H1 (cell line): ENCODE measurements at regions of chr7 and their contacts with region 1.

Region 1: GRCh38 chr7:100221231-100221718 is 1.5 kb downstream of the PVRIG start:
- DNase-seq: no peak
- H3K4me3 ChIP-seq: no peak overlapping the region
- H3K27ac ChIP-seq: no peak overlapping the region
- H3K4me1 ChIP-seq: no peaks in the 10 kb centered on the region
- H3K27me3 ChIP-seq: no peaks in the 10 kb centered on the region
- CTCF ChIP-seq: no peak
- EP300 ChIP-seq: no peak
- POLR2A ChIP-seq: no peak
- RAD21 ChIP-seq: no peak

Region 2: GRCh38 chr7:100088621-100089457 is 132.4 kb before region 1 on chr7 and contains the start of gene COPS6:
- CTCF ChIA-PET with region 1: no interaction called
- POLR2A ChIA-PET with region 1: no interaction called
- DNase-seq: peak in 1 of 2 experiments; percentile 93
- H3K4me3 ChIP-seq: peak within 1 kb of the TSS; percentile 78 to 98 (median 96)
- H3K27ac ChIP-seq: peak within 1 kb of the TSS; percentile 77
- H3K4me1 ChIP-seq: no peaks in the 10 kb centered on the region; a peak in 1 of 7 replicates
- H3K27me3 ChIP-seq: no peaks in the 10 kb centered on the region
- CTCF ChIP-seq: no peak
- EP300 ChIP-seq: peak in 1 of 2 experiments; percentile 13; a peak in 1 of 3 replicates
- POLR2A ChIP-seq: peak; percentile 54 to 83
- RAD21 ChIP-seq: no peak
- total RNA-seq, gene COPS6: 127 and 128 TPM in 2 replicates

Region 3: GRCh38 chr7:100137851-100138760 is 83.2 kb before region 1 on chr7:
- CTCF ChIA-PET with region 1: interaction called, 104 read pairs
- POLR2A ChIA-PET with region 1: interaction called, 7 read pairs
- DNase-seq: no peak
- H3K4me3 ChIP-seq: no peak overlapping the region
- H3K27ac ChIP-seq: no peak overlapping the region
- H3K4me1 ChIP-seq: peaks cover 0 to 2% (median 0%) of the 10 kb centered on the region in 4 experiments; a peak in 1 of 7 replicates
- H3K27me3 ChIP-seq: no peaks in the 10 kb centered on the region
- CTCF ChIP-seq: no peak
- EP300 ChIP-seq: no peak
- POLR2A ChIP-seq: no peak
- RAD21 ChIP-seq: no peak

Region 4: DNA sequence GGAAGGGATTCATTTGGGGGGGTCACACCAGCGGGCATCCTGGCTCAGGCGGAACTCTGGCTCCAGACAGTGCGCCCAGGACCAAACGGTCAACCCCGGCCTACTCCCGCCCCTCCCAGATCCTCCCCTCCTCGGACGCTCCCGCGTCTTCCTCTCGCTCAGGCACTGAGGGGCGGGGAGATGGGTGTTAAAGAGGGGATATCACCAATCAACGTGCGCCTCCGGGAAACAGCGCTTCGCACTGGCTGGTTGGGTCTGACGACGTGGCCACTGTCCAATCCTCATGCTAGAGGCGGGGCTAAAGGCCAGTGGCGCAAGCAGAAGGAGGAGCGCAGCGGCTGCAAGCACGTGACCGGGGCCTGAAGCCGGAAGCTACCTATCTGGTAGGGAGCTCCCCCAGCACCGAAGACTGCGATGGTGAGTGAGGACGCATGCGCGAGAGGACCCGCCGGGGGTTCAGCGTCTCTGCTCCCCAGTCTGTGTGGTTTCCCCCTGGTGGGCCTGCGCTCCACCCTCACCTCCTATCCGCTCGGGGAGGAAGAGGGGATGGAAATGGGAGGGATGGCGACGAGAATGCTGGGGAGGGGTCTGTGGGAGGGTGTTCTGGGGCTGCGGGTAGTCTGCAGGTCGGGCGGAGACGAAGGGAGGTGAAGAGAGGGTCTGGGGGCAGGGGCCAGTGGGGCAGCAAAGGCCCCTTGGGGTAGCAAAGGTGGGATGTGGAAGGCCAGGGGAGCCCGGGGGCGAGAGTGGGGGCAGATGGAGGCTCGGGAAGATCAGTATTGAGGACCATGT is 72.5 kb before region 1 on chr7 and contains the start of gene LAMTOR4:
- CTCF ChIA-PET with region 1: interaction called, 11 read pairs
- POLR2A ChIA-PET with region 1: interaction called, 7 read pairs
- DNase-seq: peak; percentile 94 to 99
- H3K4me3 ChIP-seq: peak within 1 kb of the TSS; percentile 71 to 89 (median 78)
- H3K27ac ChIP-seq: no peak within 1 kb of the TSS
- H3K4me1 ChIP-seq: peaks cover 0 to 4% (median under 1%) of the 10 kb centered on the region in 4 experiments; a peak in 3 of 7 replicates
- H3K27me3 ChIP-seq: no peaks in the 10 kb centered on the region
- CTCF ChIP-seq: peak in 1 of 3 experiments; percentile 18; a peak in 2 of 4 replicates
- EP300 ChIP-seq: no peak
- POLR2A ChIP-seq: peak; percentile 38 to 69; a peak in 2 of 3 replicates
- RAD21 ChIP-seq: no peak
- total RNA-seq, gene LAMTOR4: 153 and 161 TPM in 2 replicates

Region 5: DNA sequence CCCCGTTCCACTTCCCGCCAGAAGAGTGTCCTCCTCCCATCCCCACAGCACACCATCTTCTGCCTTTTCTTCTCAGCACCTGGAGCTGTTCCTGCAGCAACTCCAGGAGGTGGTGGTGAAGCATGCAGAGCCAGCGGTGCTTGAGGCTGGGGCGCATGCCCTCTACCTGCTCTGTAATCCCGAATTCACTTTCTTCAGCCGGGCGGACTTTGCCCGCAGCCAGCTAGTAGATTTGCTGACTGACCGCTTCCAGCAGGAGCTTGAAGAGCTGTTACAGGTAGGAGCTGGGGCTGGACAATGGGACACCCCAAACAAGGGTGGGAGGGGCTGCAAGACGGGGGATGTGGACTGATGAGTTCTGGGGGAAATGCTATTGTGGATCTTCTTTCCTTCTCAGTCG is 20.6 kb before region 1 on chr7:
- CTCF ChIA-PET with region 1: interaction called, 25 read pairs
- POLR2A ChIA-PET with region 1: interaction called, 5 read pairs
- DNase-seq: no peak
- H3K4me3 ChIP-seq: no peak overlapping the region
- H3K27ac ChIP-seq: no peak overlapping the region
- H3K4me1 ChIP-seq: peaks cover 0 to 9% (median 3%) of the 10 kb centered on the region in 4 experiments; a peak in 3 of 7 replicates
- H3K27me3 ChIP-seq: peaks cover 0 to 4% (median 1%) of the 10 kb centered on the region in 4 experiments; a peak in 4 of 7 replicates
- CTCF ChIP-seq: no peak
- EP300 ChIP-seq: no peak
- POLR2A ChIP-seq: no peak
- RAD21 ChIP-seq: no peak

Region 6: DNA sequence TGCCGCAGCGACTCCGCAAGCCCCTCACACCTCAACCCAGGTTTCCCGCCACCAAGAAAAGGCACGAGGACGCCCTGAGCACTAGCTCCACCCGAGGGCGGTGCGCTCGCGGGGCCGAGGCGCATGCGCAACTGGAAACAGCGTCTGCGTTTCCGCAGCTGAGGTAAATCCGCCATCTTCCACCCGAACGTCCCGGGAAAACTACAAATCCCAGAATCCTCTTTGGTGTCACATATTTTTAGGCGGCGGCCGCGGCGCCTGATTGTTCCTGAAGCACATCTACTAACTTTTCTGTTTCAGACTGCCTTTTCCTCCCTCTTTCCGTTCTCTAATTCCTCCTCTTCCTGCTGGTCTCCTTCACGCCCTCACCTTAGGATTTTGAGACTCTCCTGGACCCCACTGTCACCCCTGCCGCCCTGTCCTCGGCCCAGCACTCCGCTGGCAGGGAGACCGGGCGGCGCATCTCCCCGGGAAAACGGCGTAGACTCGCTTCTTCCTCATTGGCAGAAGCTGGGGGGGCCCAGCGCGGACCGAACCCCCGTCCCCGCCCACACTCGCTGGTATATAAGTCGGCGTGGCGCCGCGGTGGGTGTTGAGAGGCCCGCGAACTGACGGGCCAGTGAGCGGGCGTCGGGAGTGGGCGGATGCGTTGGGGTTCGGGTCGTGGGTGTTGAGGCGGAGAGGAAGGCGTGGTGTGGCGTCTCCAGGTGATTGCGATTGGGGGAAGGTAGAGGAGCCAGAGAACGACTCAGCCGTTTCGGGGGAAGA is 207.1 kb after region 1 on chr7 and contains the start of gene ZCWPW1:
- CTCF ChIA-PET with region 1: no interaction called
- POLR2A ChIA-PET with region 1: no interaction called
- DNase-seq: peak; percentile 90 to 96
- H3K4me3 ChIP-seq: peak within 1 kb of the TSS; percentile 73 to 85 (median 80)
- H3K27ac ChIP-seq: peak within 1 kb of the TSS; percentile 96
- H3K4me1 ChIP-seq: peaks cover 0 to 16% (median 8%) of the 10 kb centered on the region in 4 experiments; a peak in 6 of 7 replicates
- H3K27me3 ChIP-seq: peaks cover 0 to 6% (median 6%) of the 10 kb centered on the region in 4 experiments; a peak in 4 of 7 replicates
- CTCF ChIP-seq: 0 out of 4 replicates have a peak, but pooled peaks of 1 of the 3 experiments have one; percentile 6
- EP300 ChIP-seq: no peak
- POLR2A ChIP-seq: peak in 1 of 2 experiments; percentile 86; a peak in 2 of 3 replicates
- RAD21 ChIP-seq: no peak
- total RNA-seq, gene ZCWPW1: 1.4 and 2.7 TPM in 2 replicates